ENCODE measurements at regions of chr6 and their contacts with region 1.

Region 1: GRCh38 chr6:146169872-146170271 is 141.0 kb downstream of the GRM1 start:
- DNase-seq: no peak
- H3K4me3 ChIP-seq: no peak overlapping the region
- H3K27ac ChIP-seq: no peak overlapping the region
- H3K4me1 ChIP-seq: no peaks in the 10 kb centered on the region
- H3K27me3 ChIP-seq: no peaks in the 10 kb centered on the region
- CTCF ChIP-seq: no peak

Region 2: DNA sequence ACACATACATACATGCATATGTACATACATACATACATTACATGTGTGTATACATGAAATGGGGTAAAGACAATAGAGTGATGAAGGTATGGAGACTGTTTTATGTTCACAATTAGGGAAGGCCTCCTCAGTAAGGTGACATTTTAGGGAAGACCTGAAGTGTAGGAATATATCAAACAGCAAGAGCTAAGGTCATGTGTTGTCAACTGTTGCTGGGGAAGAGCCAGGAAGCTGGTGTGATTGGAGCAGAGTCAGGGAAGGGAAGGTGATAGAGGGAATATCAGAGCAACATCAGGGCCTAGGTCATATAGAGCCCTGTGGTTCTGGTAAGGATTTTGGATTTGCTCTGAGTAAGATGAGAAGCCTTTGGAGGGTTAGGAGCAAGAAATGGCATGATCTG is 347.0 kb after region 1 on chr6:
- CTCF ChIA-PET with region 1: interaction called, 10 read pairs
- dilution Hi-C with region 1: no loop called
- in situ Hi-C with region 1: no loop called
- intact Hi-C with region 1: no loop called
- DNase-seq: no peak
- H3K4me3 ChIP-seq: no peak overlapping the region
- H3K27ac ChIP-seq: no peak overlapping the region
- H3K4me1 ChIP-seq: no peaks in the 10 kb centered on the region
- H3K27me3 ChIP-seq: no peaks in the 10 kb centered on the region
- CTCF ChIP-seq: no peak